ENCODE measurements at regions of chr14 and their contacts with region 1.

Region 1: DNA sequence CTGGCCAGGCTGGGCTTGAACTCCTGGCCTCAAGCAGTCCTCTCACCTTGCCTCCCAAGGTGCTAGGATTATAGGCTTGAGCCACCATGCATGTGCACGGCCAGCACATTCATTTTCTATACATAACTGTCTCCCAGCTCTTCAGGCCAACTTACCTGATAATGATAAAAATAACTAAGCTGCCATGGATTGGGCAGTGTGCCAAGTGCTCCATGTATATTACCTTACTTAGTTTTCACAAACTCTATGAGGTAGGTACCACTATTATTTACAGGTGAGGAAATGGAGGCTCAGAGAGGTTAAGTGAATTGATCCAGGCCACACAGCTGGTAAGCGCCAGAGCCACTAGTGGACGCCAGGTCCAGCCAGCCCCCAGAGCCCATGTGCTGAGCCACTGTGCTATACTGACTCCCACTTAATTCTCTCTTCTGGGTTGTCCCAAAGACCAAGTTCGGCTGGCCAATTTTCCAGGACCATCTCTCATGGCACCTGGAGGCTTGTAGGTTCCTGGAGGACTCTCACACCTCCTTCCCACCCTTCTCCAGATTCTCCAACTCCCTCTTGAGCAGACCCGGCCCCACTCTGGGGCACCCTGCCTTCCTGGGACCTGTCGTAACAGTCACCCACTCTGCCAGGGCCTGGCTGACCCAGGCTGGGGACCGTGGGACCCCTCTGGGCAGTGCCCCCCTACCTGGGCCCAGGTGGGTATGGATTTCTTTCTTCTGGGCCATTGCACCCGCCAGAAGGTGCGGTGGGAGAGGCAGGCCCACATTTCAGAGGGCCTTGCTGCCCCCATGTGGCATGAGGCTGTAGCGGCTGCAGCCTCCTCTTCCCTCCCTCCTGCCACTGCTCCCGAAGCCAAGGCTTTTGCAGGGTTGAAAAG is 30.2 kb upstream of the CIPC start:
- DNase-seq: peak; percentile 71 to 72
- H3K4me3 ChIP-seq: no peak overlapping the region
- H3K27ac ChIP-seq: peak overlapping the region; percentile 8 to 26
- H3K4me1 ChIP-seq: peaks cover 0 to 13% of the 10 kb centered on the region in 2 donors
- H3K27me3 ChIP-seq: no peaks in the 10 kb centered on the region
- CTCF ChIP-seq: peak; percentile 77 to 94 (median 91)
- POLR2A ChIP-seq: no peak

Region 2: DNA sequence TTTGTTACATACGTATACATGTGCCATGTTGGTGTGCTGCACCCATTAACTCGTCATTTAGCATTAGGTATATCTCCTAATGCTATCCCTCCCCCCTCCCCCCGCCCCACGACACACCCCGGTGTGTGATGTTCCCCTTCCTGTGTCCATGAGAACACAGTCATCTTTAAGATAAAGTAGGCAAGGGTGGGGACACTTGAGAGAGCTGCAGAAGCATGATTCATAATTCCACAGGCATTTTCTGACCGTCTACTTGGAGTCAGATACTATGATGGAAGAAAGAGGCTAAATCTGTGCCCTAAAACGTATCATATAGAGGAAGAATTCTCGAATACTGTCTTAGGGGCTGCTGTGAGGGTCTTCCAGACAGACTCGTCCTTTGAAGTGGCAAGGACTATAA is 452.5 kb before region 1 on chr14:
- intact Hi-C with region 1: no loop called
- DNase-seq: no peak
- H3K4me3 ChIP-seq: no peak overlapping the region
- H3K27ac ChIP-seq: no peak overlapping the region
- H3K4me1 ChIP-seq: no peaks in the 10 kb centered on the region
- H3K27me3 ChIP-seq: no peaks in the 10 kb centered on the region
- CTCF ChIP-seq: no peak
- POLR2A ChIP-seq: no peak

Region 3: DNA sequence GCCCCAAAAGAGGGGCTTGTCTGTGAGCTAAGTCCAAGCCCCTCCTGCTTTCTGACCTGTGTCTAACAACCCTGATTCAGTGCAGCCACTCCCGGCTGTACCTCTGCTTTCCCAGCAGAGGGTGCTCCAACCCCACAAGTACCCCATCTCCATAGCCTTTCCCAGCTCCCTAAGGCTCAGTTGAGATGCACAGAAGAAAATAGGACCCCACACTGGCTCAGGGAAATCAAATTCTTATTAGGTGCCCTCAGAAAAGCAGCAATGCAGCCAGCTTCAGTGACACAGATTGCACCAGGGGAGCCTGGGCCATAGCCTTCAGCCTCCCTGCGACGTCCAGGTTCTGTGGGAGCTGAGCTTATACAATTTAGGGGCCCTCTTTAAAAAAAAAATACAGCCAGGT is 191.8 kb before region 1 on chr14:
- intact Hi-C with region 1: loop called (anchors 10 kb)
- DNase-seq: peak in 1 of 2 donors; percentile 43
- H3K4me3 ChIP-seq: no peak overlapping the region
- H3K27ac ChIP-seq: no peak overlapping the region
- H3K4me1 ChIP-seq: no peaks in the 10 kb centered on the region
- H3K27me3 ChIP-seq: no peaks in the 10 kb centered on the region
- CTCF ChIP-seq: peak; percentile 80 to 97 (median 96)
- POLR2A ChIP-seq: no peak

Region 4: DNA sequence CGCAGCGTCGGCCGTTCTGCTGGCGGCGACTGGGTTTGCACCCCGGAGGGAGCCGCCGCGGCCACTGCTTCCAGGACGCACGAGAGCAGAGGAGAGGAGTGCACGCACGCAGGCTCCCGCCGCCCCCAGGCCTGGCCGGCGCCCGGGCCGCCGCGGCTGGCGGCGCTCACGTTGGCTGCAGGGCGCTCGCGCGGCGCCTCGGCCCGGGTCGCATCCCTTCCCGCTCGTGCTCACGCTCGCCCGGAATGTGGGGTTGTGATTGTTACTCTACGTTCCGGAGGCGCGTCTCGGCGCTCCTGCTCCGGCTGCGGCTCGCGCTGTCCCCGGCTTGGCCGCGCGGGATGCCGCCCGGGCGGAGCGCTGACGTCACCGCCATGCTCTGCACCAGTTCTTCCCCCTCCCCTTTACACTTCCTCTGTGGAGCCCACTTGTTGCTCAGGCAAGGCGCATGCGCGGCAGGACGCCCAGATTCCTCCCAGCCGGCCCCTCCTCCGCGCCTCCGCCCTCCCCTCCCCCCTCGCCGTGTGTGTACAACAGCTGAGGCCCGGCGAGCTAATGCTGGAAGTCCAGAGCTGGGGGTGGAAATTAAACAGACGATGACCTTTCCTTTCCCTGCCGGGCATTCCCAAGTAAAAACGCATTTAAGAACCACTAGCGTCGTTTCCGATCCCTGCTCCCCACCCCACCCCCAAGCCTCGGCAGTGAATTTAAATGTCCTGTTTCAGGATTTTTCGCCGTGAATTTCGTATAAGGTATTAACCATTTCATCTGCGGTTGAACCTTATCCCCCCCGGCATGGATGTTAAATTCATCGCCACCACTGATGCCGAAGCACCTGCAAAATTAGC is 39.3 kb before region 1 on chr14 and contains the start of gene IRF2BPL:
- intact Hi-C with region 1: loop called (anchors 5 kb)
- DNase-seq: peak; percentile 98 to 99
- H3K4me3 ChIP-seq: peak within 1 kb of the TSS; percentile 91 to 95 (median 94)
- H3K27ac ChIP-seq: peak within 1 kb of the TSS; percentile 99
- H3K4me1 ChIP-seq: peaks cover 19 to 31% of the 10 kb centered on the region in 2 donors
- H3K27me3 ChIP-seq: no peaks in the 10 kb centered on the region
- CTCF ChIP-seq: peak in 1 of 3 donors; percentile 13
- POLR2A ChIP-seq: peak; percentile 74
- total RNA-seq, gene IRF2BPL: 39.5 to 76.5 (median 47.2) TPM

Region 5: GRCh38 chr14:77124345-77125280 is 56.7 kb after region 1 on chr14:
- intact Hi-C with region 1: loop called (anchors 2 kb)
- DNase-seq: no peak
- H3K4me3 ChIP-seq: peak overlapping the region; percentile 40 to 68 (median 48)
- H3K27ac ChIP-seq: peak overlapping the region in 1 of 2 donors; percentile 64
- H3K4me1 ChIP-seq: peaks cover 5 to 11% of the 10 kb centered on the region in 2 donors
- H3K27me3 ChIP-seq: no peaks in the 10 kb centered on the region
- CTCF ChIP-seq: peak in 1 of 3 donors; percentile 85
- POLR2A ChIP-seq: no peak

Measured in breast epithelium (tissue), 4 donors.